ENCODE measurements at regions of chr11 and their contacts with region 1.

Region 1: DNA sequence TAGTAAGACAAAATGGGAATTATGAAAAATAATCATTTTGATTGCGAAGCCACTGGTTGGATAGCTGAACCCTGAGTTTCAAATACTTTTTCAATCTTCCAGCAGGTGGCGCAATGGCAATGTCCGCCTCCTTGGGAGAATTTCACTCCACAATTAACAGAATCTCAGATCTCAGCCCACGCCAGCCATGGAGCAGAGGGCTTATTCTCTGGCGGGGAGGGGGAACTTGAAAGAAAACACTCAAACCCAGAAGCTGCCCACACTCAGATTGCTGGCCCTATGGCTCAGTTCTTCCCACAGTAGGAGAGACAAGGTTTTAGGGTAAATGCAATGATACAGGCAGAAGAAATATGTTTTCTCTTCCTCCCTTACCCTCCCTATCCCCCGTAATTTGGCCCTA is 38.7 kb upstream of the RCN1 start:
- DNase-seq: no peak

Region 2: DNA sequence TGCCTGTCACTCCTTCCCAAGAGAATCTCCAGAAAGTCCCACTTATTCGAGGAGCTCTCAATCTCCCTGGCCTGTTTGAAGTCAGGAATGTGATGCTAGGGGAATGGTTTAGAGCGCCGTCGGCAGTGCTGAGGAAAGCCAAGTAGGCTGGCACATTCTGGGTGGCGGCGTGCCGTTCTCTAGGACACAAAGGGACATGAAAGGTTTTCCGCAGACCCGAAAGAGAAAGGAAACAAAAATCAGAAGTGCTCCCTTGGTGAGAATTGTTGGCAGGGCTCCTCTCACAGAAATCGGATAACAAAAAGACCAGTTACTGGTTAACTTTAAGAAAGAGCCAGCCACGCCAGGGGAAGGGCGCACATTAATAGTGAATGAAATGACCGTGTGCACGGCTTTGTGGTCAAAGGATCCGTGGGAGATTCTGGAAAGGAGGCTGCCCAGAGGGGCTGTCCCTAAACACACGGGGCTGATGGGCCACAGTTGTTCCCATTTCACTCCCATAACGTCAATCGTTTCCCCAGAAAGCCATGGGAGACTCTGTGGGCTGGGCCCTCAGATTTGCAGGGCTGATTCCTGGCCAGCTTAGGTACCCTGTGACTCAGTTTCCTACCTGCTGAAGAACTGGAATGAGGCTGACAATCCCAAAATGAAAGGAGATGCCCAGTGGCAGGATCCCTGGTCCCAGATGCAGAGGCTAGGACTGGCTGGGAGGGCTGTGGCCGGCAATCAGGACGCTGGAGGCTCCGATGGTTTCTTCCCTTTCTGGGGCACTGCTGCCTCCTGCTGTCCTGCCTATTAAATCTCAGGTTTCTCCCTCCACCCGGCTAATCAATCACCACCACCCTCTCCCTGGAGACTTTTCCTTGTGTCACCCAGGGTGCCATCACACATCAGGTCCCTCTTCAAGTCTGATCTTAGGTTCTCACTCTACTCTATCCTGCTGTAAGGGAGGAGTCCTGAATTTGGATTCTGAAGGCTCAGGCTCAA is 120.9 kb after region 1 on chr11:
- intact Hi-C with region 1: loop called (anchors 1 kb)
- DNase-seq: peak; percentile 80